Aorta (tissue), 5 donors: ENCODE measurements at regions of chr9 and their contacts with region 1.

Region 1: GRCh38 chr9:70587201-70587600 is 172.7 kb upstream of the KLF9 start:
- DNase-seq: no peak
- ATAC-seq: peak; percentile 81
- H3K4me3 ChIP-seq: no peak overlapping the region
- H3K27ac ChIP-seq: peak overlapping the region; percentile 94 to 100
- H3K4me1 ChIP-seq: peaks cover 14 to 17% of the 10 kb centered on the region in 2 donors
- H3K27me3 ChIP-seq: no peaks in the 10 kb centered on the region

Region 2: GRCh38 chr9:70504834-70505233 is 82.4 kb before region 1 on chr9:
- intact Hi-C with region 1: loop called in 1 of 2 experiments (anchors 2 kb)
- DNase-seq: no peak
- ATAC-seq: no peak
- H3K4me3 ChIP-seq: no peak overlapping the region
- H3K27ac ChIP-seq: no peak overlapping the region
- H3K4me1 ChIP-seq: no peaks in the 10 kb centered on the region
- H3K27me3 ChIP-seq: no peaks in the 10 kb centered on the region